ENCODE measurements at regions of chr9 and their contacts with region 1.

Region 1: DNA sequence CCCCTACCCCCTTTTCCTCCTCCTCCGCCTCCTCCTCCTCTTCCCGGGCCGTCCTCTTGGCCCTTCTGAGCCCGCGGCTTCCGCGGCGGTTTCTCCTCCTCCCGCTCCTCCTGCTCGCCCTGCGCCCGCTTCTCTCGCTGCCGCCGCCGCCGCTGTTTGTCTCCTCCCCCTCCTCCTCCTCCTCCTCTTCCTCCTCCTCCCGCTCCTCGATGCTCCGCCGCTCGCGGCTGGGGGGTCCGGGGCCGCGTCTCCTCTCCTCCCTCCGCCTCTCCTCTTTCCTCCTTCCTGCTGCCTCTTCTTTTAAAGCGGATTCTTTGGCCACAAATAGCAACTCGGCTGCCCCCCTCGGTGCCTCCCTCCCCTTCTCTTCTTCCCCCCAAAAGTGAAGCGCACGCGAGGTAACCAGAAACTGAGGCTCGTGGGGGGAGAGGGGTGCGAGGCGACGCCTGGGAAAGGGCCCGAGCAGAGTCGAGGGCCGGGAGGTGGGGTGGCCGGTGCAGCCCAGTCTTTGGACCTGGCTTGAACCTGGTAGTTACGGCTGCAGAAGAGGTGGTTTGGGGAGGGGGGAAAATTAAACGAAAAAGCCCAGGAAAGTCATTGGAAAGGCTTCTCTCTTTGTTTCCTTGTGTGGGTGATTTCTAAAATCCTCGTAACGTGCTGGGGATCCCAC is 1058.5 kb upstream of the DMAC1 start:
- DNase-seq: peak in 1 of 2 donors; percentile 78
- H3K4me3 ChIP-seq: peak overlapping the region; percentile 77 to 78
- H3K27ac ChIP-seq: peak overlapping the region; percentile 76 to 83
- H3K4me1 ChIP-seq: peaks cover 0 to 4% of the 10 kb centered on the region in 2 donors
- H3K27me3 ChIP-seq: no peaks in the 10 kb centered on the region
- CTCF ChIP-seq: no peak

Region 2: GRCh38 chr9:8718121-8718725 is 139.8 kb before region 1 on chr9:
- intact Hi-C with region 1: loop called (anchors 5 kb)
- DNase-seq: no peak
- H3K4me3 ChIP-seq: peak overlapping the region; percentile 6 to 52
- H3K27ac ChIP-seq: peak overlapping the region; percentile 68 to 69
- H3K4me1 ChIP-seq: peaks cover 4% of the 10 kb centered on the region in 2 donors
- H3K27me3 ChIP-seq: no peaks in the 10 kb centered on the region
- CTCF ChIP-seq: no peak

Region 3: DNA sequence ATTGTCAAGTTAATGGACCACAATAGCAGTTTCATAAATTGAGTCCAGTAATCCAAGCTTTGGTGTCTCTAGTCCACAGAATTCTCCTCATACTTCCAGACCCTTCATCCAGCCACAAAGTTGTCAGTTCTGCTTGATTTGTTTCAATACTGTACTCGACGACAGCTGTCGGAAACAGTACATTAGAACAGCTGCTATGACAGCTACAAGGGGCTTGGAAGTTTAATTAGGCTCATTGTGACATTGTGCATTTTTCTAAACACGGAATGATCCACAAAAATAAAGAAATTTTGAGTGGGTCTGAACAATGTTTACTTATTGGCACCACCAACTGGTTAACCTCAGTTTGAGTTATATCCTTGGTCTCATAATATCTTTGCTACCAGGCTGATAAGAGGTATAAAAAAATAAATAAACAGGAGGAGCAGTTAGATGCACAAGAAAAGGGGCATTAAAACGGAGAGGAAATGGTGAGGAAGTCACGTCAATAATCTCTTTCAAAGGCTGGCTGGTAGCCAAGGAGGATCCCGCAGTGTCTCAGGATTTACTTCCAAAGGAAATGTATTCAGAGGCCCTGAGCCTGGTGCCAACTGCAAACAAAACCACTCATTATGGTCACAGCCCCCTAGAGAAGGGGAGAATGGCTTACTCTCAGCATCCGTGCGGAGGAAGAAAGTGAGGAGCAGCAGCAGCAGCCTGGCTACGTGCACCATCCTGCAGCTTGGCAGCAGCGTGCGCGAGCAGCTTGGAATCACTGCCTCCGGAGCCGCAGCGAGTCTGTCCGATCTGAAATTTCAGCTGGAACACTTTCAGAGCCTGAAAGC is 124.7 kb before region 1 on chr9:
- intact Hi-C with region 1: loop called (anchors 5 kb)
- DNase-seq: no peak
- H3K4me3 ChIP-seq: peak overlapping the region; percentile 18 to 57
- H3K27ac ChIP-seq: peak overlapping the region in 1 of 2 donors; percentile 19
- H3K4me1 ChIP-seq: peaks cover 0 to 5% of the 10 kb centered on the region in 2 donors
- H3K27me3 ChIP-seq: no peaks in the 10 kb centered on the region
- CTCF ChIP-seq: no peak

Region 4: GRCh38 chr9:9973062-9973461 is 1115.0 kb after region 1 on chr9:
- intact Hi-C with region 1: no loop called
- DNase-seq: no peak
- H3K4me3 ChIP-seq: no peak overlapping the region
- H3K27ac ChIP-seq: no peak overlapping the region
- H3K4me1 ChIP-seq: no peaks in the 10 kb centered on the region
- H3K27me3 ChIP-seq: no peaks in the 10 kb centered on the region
- CTCF ChIP-seq: no peak

Measured in ascending aorta (tissue), 2 donors.